Endothelial cell of umbilical vein (primary cell): ENCODE measurements at regions of chr12 and their contacts with region 1.

Region 1: DNA sequence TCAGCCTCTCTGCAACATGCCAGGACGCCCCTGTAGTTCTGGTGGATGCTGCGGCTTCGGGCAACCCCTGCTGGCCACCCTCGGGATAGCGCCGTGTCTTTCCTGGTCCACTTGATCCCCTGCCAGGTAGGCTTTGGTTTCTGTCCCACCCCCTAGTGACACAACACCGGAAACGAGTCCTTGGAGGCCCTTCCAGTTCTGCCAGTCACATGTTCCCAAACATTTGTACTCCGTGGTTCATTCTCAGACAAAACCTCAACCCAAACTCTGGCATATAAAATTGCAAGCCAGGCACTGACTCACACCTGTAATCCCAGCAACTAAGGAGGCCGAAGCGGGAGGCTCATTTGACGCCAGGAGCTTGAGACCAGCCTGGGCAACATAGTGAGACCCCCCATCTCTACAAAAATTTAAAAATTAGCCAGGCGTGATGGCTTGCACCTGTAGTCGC is 37.1 kb downstream of the RASAL1 start:
- DNase-seq: peak; percentile 54
- H3K4me3 ChIP-seq: no peak overlapping the region
- H3K27ac ChIP-seq: no peak overlapping the region
- H3K4me1 ChIP-seq: no peaks in the 10 kb centered on the region
- H3K27me3 ChIP-seq: no peaks in the 10 kb centered on the region
- CTCF ChIP-seq: peak; percentile 75 to 87
- POLR2A ChIP-seq: no peak

Region 2: GRCh38 chr12:112239881-112240280 is 858.6 kb before region 1 on chr12:
- CTCF ChIA-PET with region 1: no interaction called
- POLR2A ChIA-PET with region 1: no interaction called
- dilution Hi-C with region 1: no loop called
- intact Hi-C with region 1: no loop called
- DNase-seq: no peak
- H3K4me3 ChIP-seq: no peak overlapping the region
- H3K27ac ChIP-seq: no peak overlapping the region
- H3K4me1 ChIP-seq: no peaks in the 10 kb centered on the region
- H3K27me3 ChIP-seq: no peaks in the 10 kb centered on the region
- CTCF ChIP-seq: no peak
- POLR2A ChIP-seq: no peak

Region 3: DNA sequence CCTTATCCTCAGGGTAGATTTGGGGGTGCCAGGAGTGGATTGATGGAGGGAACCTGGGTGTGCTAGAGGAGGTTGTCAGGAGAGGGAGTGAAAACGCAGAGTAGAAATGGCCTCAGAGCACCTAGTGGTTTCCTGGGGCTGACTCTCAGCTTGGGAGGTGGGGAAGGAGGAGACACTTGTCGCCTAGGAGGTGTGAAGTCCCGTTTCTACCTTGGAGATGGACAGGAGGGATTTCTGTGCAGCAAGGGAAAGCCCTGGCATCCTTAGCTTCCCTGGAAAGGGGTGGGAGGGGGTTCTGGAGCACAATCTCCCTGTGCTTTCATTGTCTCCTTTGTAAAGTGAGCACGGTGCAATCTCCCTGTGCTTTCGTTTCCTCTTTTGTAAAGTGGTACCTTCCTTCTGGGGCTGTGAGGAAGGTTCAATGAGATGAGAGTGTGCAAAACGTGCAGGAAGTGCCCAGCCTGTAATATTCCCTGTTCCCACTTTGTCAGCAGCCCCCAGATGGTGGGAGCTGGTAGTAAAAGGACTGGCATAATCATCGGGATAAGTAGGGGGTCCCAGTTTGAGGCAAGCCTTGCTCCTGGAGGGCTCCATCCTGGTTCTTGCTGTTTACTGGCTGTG is 158.6 kb before region 1 on chr12:
- CTCF ChIA-PET with region 1: no interaction called
- POLR2A ChIA-PET with region 1: no interaction called
- dilution Hi-C with region 1: no loop called
- intact Hi-C with region 1: no loop called
- DNase-seq: no peak
- H3K4me3 ChIP-seq: no peak overlapping the region
- H3K27ac ChIP-seq: no peak overlapping the region
- H3K4me1 ChIP-seq: peaks cover 5% of the 10 kb centered on the region
- H3K27me3 ChIP-seq: no peaks in the 10 kb centered on the region
- CTCF ChIP-seq: no peak
- POLR2A ChIP-seq: no peak

Region 4: DNA sequence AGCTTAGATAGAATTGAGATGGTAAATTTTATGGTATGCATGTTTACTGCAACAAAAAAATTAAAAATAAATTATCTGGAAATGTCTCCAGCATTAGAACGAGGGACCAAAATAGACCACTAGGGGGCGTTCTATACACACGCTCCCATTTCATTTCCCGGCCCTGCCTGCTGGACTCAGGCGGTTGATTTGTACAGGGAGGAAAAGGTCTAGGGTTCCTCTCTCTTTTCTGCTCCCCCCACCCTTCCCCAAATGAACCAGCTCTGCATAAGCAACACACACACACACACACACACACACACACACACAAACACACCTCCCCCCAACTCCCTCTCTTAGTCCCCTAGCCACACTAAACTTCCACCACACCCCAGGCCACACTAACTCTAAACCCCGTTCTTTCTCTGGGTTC is 49.7 kb before region 1 on chr12:
- CTCF ChIA-PET with region 1: interaction called, 3 read pairs
- POLR2A ChIA-PET with region 1: no interaction called
- dilution Hi-C with region 1: no loop called
- intact Hi-C with region 1: loop called (anchors 1 kb)
- DNase-seq: peak; percentile 49
- H3K4me3 ChIP-seq: no peak overlapping the region
- H3K27ac ChIP-seq: no peak overlapping the region
- H3K4me1 ChIP-seq: no peaks in the 10 kb centered on the region
- H3K27me3 ChIP-seq: peaks cover 5 to 6% of the 10 kb centered on the region in 2 experiments
- CTCF ChIP-seq: peak; percentile 71 to 79
- POLR2A ChIP-seq: no peak

Region 5: GRCh38 chr12:113341535-113341934 is 243.1 kb after region 1 on chr12:
- CTCF ChIA-PET with region 1: no interaction called
- POLR2A ChIA-PET with region 1: no interaction called
- dilution Hi-C with region 1: no loop called
- intact Hi-C with region 1: no loop called
- DNase-seq: no peak
- H3K4me3 ChIP-seq: no peak overlapping the region
- H3K27ac ChIP-seq: no peak overlapping the region
- H3K4me1 ChIP-seq: no peaks in the 10 kb centered on the region
- H3K27me3 ChIP-seq: no peaks in the 10 kb centered on the region
- CTCF ChIP-seq: no peak
- POLR2A ChIP-seq: no peak